ENCODE measurements at regions of chr13 and their contacts with region 1.

Region 1: GRCh38 chr13:102913914-102914313 is 68.1 kb downstream of the ERCC5 start:
- DNase-seq: peak in 4 of 7 donors; percentile 10 to 58 (median 45)
- H3K4me3 ChIP-seq: no peak overlapping the region
- H3K27ac ChIP-seq: no peak overlapping the region
- H3K4me1 ChIP-seq: no peaks in the 10 kb centered on the region
- H3K27me3 ChIP-seq: peaks cover 8% of the 10 kb centered on the region
- CTCF ChIP-seq: no peak
- POLR2A ChIP-seq: no peak

Region 2: GRCh38 chr13:103067751-103068555 is 154.0 kb after region 1 on chr13:
- intact Hi-C with region 1: no loop called
- DNase-seq: no peak
- H3K4me3 ChIP-seq: no peak overlapping the region
- H3K27ac ChIP-seq: no peak overlapping the region
- H3K4me1 ChIP-seq: no peaks in the 10 kb centered on the region
- H3K27me3 ChIP-seq: no peaks in the 10 kb centered on the region
- CTCF ChIP-seq: no peak
- POLR2A ChIP-seq: no peak

Region 3: GRCh38 chr13:103130681-103131210 is 216.8 kb after region 1 on chr13:
- intact Hi-C with region 1: loop called in 1 of 2 experiments (anchors 10 kb)
- DNase-seq: no peak
- H3K4me3 ChIP-seq: no peak overlapping the region
- H3K27ac ChIP-seq: no peak overlapping the region
- H3K4me1 ChIP-seq: no peaks in the 10 kb centered on the region
- H3K27me3 ChIP-seq: peaks cover 3% of the 10 kb centered on the region
- CTCF ChIP-seq: no peak
- POLR2A ChIP-seq: no peak

Region 4: GRCh38 chr13:103140001-103140671 is 226.2 kb after region 1 on chr13:
- intact Hi-C with region 1: loop called (anchors 2 to 10 kb)
- DNase-seq: peak in 6 of 7 donors; percentile 14 to 55 (median 24)
- H3K4me3 ChIP-seq: no peak overlapping the region
- H3K27ac ChIP-seq: no peak overlapping the region
- H3K4me1 ChIP-seq: no peaks in the 10 kb centered on the region
- H3K27me3 ChIP-seq: peaks cover 2% of the 10 kb centered on the region
- CTCF ChIP-seq: peak; percentile 38 to 70 (median 67)
- POLR2A ChIP-seq: no peak

Region 5: DNA sequence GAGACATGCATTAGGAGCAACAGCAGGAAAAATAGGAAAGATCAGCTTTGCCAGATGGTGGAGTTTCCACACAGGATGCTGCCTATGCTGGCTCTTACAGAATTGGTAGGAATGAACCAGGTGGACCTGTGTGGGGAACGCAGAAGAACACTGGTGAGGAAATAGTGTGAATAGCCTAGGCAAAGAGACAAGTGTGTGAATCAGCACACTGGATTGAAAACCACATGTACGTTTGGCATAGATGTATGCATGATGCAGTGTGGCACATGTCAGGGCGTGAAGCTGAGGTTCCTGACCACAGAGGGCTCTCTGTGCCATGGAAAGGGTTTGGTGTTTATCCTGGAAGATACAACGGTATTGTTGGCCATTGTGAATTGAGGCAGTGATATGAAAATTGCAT is 308.8 kb after region 1 on chr13:
- intact Hi-C with region 1: no loop called
- DNase-seq: no peak
- H3K4me3 ChIP-seq: no peak overlapping the region
- H3K27ac ChIP-seq: no peak overlapping the region
- H3K4me1 ChIP-seq: no peaks in the 10 kb centered on the region
- H3K27me3 ChIP-seq: no peaks in the 10 kb centered on the region
- CTCF ChIP-seq: no peak
- POLR2A ChIP-seq: no peak

Measured in adrenal gland (tissue), 19 donors.